Activated naive CD4-positive, alpha-beta T cell treated with anti-CD3 and anti-CD28 coated beads, Interleukin-2, amount 10 ng/mL, durations not matched to agents 7 days and 5 days (primary cell): ENCODE measurements at regions of chr15 and their contacts with region 1.

Region 1: DNA sequence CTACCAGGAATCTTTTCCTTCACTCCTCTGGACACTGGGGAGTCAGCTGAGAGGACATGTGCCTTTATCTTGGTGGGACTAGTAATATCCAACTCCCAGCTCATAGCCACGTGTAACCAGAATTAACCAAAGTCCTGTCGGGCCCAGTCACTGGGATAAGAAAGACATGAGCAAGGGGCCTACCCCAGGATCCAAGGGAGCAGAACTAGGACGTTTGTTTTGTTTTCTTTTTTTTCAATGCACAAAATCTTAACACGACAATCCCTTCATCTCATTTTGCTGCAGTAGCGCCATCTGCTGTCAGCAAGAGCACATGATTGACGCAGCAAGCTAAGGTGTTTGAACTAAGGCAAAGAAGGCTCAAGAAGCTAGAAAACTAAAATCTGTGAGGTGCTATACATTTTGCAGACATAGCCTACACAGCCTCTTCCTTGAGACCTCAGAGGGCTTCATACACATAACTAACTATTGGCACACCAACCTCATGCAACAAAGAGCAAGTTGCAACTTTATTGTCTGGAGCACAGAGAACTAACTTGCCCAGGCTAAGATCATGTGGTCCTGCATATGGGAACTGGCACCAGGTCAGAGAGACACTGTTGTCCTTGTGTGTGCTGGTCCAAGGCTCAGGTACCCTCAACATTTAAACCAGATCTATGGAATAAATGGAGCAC is 43.6 kb downstream of the RLBP1 start:
- DNase-seq: peak; percentile 82
- H3K4me3 Mint-ChIP-seq: no peak overlapping the region
- H3K27ac Mint-ChIP-seq: peak overlapping the region; percentile 73
- H3K4me1 Mint-ChIP-seq: peaks cover 6% of the 10 kb centered on the region
- H3K27me3 Mint-ChIP-seq: no peaks in the 10 kb centered on the region

Region 2: DNA sequence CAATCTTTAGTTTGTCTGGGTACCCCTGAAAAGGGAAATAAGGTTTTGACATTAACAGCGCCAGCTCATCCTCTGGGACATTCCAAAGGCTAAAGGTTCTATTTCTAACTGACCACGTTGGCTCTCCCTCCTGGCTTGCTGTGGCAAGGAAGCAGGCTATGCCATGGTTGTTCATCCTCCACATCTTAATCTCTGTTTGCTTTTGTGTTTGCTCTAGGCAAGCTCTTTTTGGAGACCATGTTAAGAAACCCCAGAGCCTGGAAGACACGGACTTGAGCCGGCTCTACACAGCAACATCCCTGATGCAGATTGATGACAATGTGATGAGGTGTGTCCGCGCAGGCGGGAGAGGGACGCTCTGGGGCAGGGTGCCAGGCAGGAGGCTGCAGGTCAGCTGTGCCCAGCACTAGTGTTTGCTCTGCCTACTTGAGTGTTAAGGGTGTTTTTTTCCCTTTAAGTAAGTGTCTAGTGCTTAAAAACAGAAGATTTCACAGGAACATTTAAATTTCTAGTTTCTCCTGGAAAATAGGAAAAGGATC is 10.3 kb after region 1 on chr15:
- CTCF ChIA-PET with region 1: interaction called, 10 read pairs
- DNase-seq: no peak
- H3K4me3 Mint-ChIP-seq: no peak overlapping the region
- H3K27ac Mint-ChIP-seq: no peak overlapping the region
- H3K4me1 Mint-ChIP-seq: no peaks in the 10 kb centered on the region
- H3K27me3 Mint-ChIP-seq: no peaks in the 10 kb centered on the region